Activated CD8-positive, alpha-beta T cell treated with anti-CD3 and anti-CD28 coated beads for 36 hours (primary cell): ENCODE measurements at regions of chr20 and their contacts with region 1.

Region 1: GRCh38 chr20:5100684-5101347 is 18.9 kb downstream of the PCNA start:
- DNase-seq: peak; percentile 85
- ATAC-seq: peak; percentile 91
- H3K4me3 Mint-ChIP-seq: no peak overlapping the region
- H3K27ac Mint-ChIP-seq: peak overlapping the region; percentile 10
- H3K4me1 Mint-ChIP-seq: peaks cover 10% of the 10 kb centered on the region
- H3K27me3 Mint-ChIP-seq: no peaks in the 10 kb centered on the region
- CTCF ChIP-seq: peak; percentile 94

Region 2: GRCh38 chr20:4848041-4848440 is 252.8 kb before region 1 on chr20:
- CTCF ChIA-PET with region 1: no interaction called
- POLR2A ChIA-PET with region 1: no interaction called
- intact Hi-C with region 1: no loop called
- DNase-seq: no peak
- ATAC-seq: no peak
- H3K4me3 Mint-ChIP-seq: no peak overlapping the region
- H3K27ac Mint-ChIP-seq: no peak overlapping the region
- H3K4me1 Mint-ChIP-seq: peaks cover 4% of the 10 kb centered on the region
- H3K27me3 Mint-ChIP-seq: no peaks in the 10 kb centered on the region
- CTCF ChIP-seq: no peak

Region 3: GRCh38 chr20:4956200-4956810 is 144.5 kb before region 1 on chr20:
- CTCF ChIA-PET with region 1: interaction called, 20 read pairs
- POLR2A ChIA-PET with region 1: interaction called, 3 read pairs
- intact Hi-C with region 1: loop called (anchors 10 kb)
- DNase-seq: no peak
- ATAC-seq: peak; percentile 70
- H3K4me3 Mint-ChIP-seq: no peak overlapping the region
- H3K27ac Mint-ChIP-seq: no peak overlapping the region
- H3K4me1 Mint-ChIP-seq: peaks cover 9% of the 10 kb centered on the region
- H3K27me3 Mint-ChIP-seq: no peaks in the 10 kb centered on the region
- CTCF ChIP-seq: peak; percentile 87

Region 4: DNA sequence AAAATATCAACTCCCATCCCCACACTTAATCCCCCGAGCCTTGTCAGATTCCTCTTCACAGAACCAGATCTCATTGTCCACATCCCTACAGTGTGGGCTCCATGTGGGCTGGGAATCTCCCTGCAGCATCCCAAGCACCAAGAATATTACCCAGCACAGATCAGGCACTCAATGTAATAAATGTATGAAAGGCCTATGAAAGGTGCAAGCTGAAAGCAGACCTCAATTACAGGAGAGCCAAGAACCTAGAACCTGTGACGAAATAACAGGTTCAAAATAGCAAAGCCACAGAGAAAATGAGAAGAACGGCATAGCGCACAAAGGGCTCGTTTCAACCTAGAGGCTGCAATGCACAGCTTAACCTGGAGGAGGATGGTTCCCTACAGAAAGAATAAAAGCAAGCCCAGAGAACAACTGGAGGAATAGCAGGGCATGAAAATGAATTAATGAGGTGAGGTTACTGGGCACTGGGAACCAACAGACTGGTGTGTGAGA is 102.6 kb before region 1 on chr20:
- CTCF ChIA-PET with region 1: interaction called, 13 read pairs
- POLR2A ChIA-PET with region 1: no interaction called
- intact Hi-C with region 1: no loop called
- DNase-seq: no peak
- ATAC-seq: no peak
- H3K4me3 Mint-ChIP-seq: peak overlapping the region; percentile 18
- H3K27ac Mint-ChIP-seq: no peak overlapping the region
- H3K4me1 Mint-ChIP-seq: peaks cover 51% of the 10 kb centered on the region
- H3K27me3 Mint-ChIP-seq: no peaks in the 10 kb centered on the region
- CTCF ChIP-seq: no peak

Region 5: GRCh38 chr20:5078399-5078958 is 22.3 kb before region 1 on chr20:
- CTCF ChIA-PET with region 1: interaction called, 33 read pairs
- POLR2A ChIA-PET with region 1: interaction called, 3 read pairs
- intact Hi-C with region 1: no loop called
- DNase-seq: peak; percentile 95
- ATAC-seq: peak; percentile 95
- H3K4me3 Mint-ChIP-seq: peak overlapping the region; percentile 70
- H3K27ac Mint-ChIP-seq: peak overlapping the region; percentile 92
- H3K4me1 Mint-ChIP-seq: peaks cover 42% of the 10 kb centered on the region
- H3K27me3 Mint-ChIP-seq: no peaks in the 10 kb centered on the region
- CTCF ChIP-seq: no peak

Region 6: GRCh38 chr20:5191829-5192569 is 91.2 kb after region 1 on chr20:
- CTCF ChIA-PET with region 1: interaction called, 17 read pairs
- POLR2A ChIA-PET with region 1: interaction called, 3 read pairs
- intact Hi-C with region 1: no loop called
- DNase-seq: peak; percentile 59
- ATAC-seq: peak; percentile 84
- H3K4me3 Mint-ChIP-seq: no peak overlapping the region
- H3K27ac Mint-ChIP-seq: peak overlapping the region; percentile 67
- H3K4me1 Mint-ChIP-seq: peaks cover 10% of the 10 kb centered on the region
- H3K27me3 Mint-ChIP-seq: no peaks in the 10 kb centered on the region
- CTCF ChIP-seq: peak; percentile 75